Posterior vena cava (tissue), 2 donors: ENCODE measurements at regions of chr3 and their contacts with region 1.

Region 1: DNA sequence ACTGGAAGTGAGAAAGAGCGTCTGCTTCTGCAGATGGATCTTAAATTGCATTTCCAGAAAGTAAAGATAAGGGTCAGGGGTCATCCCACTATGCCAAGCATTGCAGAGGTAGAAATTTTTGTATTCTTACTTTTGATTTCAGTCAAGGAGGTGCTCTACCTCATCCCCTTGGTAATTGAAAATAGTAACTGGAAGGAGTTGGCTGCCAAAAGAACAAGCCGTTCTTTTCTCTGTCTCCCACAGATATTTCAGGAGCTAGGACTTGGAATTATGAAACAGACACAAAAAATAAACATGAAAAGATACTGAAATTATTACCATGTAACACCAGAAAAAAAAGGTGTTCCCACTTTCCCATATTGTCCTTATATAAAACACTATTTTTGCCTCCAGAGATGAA is 309.9 kb upstream of the UMPS start:
- DNase-seq: no peak

Region 2: DNA sequence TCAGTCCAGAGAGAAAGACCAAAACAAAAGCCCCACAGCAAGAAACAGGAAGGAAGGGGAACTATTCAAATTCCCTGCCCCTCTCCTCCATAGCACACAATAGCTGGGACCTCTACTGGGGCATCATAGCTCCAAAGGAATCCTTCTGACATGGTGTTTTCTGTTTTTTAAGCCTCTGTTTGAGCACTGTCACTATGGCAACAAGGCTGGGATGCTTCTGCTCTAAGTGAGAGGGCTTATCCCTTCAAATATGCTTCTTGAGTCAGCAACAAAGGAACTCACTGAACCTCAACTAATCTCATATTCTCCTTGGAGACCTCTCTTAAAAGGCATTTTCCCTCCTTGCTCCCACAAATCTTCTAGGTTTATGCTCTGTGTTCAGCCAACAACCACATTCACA is 576.7 kb before region 1 on chr3:
- intact Hi-C with region 1: no loop called
- DNase-seq: no peak

Region 3: DNA sequence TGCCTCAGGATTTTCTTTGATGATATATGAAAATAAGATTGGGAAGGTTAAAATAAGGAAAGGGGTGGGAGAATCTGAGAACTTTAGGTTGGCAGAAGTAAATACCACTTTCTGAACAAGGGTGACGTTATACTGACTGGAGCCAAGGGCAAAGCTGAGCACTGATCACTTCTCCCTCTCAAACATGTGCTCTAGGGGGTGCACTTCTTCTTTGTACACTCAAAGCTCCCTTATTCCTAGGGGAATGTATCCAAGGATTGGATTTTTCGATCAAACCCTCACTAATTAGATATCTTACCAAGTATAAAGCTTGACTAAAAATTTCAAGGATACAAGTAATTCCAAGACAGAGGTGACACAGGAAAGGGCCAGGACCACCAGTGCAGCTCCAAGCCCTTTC is 65.9 kb after region 1 on chr3:
- intact Hi-C with region 1: loop called in 1 of 2 experiments (anchors 2 kb)
- DNase-seq: no peak

Region 4: DNA sequence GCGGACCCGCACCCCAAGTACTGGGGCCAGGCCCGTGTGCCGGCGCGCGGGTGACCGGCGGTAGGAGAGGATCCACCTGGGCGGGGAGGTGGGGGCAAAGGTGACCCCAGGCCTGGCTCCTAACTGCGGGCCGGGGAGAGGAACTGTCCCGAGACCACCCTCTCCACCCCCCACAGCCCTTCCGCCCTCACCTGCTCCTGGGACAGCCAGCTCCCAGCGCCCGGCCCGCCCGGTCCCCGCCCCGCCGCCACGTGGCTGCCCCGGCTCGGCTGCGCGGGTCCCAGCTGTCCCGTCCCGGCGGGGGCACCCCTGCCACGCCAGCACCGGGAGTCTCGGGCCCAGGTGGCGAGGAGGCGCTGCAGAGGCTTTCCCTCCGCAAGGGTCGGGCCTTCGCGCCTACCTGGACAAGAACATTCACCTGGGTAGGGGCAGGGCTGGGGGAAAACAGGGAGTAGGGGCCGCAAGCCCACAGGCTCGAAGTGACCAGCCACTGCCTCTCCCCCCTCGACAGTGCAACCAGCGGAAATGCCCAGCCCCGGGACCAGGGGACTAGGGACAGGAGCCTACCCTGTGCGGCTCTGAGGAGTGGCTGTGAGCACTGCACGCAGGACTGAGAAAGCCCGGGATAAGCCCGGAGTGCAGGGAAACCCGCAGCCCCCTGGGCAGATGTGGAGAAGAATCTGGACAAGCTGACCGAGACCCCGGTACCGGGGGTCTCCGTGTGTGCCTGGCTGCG is 792.3 kb after region 1 on chr3 and contains the start of gene SLC12A8:
- intact Hi-C with region 1: no loop called
- DNase-seq: no peak
- total RNA-seq, gene SLC12A8: 0.67 to 0.69 TPM